AG04449 (cell line): ENCODE measurements at regions of chr9 and their contacts with region 1.

Region 1: GRCh38 chr9:36116593-36116992 is 19.9 kb upstream of the GLIPR2 start:
- DNase-seq: no peak
- H3K4me3 ChIP-seq: no peak overlapping the region
- CTCF ChIP-seq: no peak

Region 2: DNA sequence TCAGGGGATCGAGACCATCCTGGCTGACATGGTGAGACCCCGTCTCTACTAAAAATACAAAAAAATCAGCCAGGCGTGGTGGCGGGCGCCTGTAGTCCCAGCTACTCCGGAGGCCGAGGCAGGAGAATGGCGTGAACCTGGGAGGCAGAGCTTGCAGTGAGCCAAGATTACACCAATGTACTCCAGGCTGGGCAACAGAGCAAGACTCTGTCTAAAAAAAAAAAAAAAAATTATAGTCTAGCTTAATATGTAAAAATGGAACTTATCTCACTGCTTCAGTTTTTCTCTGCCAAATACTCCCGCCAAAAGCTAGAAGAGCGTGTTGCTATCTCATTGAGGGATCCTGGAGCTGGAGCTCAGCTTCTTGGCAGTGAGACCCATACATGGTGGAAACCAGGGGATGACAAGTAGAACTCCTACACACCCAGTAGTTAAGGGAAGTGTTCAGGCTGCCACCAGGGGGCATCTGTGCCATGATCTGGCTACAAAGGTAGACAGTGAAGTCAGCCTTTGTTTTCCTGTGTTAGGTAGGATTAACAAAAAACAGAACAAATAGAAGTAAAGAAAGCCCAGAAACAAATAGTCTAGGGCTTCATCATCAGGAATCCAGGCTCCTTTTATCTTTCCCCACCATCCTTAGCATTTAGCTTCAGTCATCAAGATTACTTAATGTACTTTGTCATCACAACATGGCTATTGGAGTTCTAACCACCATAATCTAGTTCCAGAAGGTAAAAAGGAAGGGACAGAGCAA is 13.7 kb before region 1 on chr9:
- CTCF ChIA-PET with region 1: interaction called, 29 read pairs
- POLR2A ChIA-PET with region 1: no interaction called
- DNase-seq: no peak
- H3K4me3 ChIP-seq: no peak overlapping the region
- CTCF ChIP-seq: peak; percentile 43